Endothelial cell of umbilical vein (primary cell): ENCODE measurements at regions of chr1 and their contacts with region 1.

Region 1: DNA sequence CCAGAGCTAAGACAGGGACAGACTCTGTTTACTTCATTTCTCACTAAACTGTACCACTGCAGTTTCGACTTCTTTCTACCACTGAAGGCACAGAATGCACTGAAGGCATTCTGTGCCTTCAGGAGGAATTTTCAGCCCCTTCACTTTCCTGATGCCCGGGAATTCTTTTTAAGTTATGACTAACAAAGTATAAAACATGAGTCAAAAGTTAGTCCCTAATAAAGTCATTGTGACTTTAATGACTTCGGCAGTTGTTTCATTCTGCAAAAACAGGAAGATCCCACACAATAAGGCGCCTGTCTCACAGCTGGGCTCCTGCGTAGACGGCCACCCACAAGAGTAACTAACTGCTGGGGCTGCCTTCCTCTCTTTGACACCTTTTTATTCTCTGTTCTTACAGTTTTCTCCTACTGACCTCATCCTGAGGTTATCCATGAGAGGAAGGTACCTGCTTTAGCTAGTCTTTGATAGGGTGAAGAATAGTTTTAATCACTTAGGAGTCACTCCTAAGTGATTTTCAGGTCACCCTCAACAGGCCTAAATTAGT is 183.9 kb upstream of the SGIP1 start:
- DNase-seq: peak; percentile 93
- H3K4me3 ChIP-seq: peak overlapping the region in 1 of 3 experiments; percentile 3
- H3K27ac ChIP-seq: peak overlapping the region; percentile 96
- H3K4me1 ChIP-seq: peaks cover 100% of the 10 kb centered on the region
- H3K27me3 ChIP-seq: no peaks in the 10 kb centered on the region
- CTCF ChIP-seq: no peak
- POLR2A ChIP-seq: peak; percentile 14

Region 2: DNA sequence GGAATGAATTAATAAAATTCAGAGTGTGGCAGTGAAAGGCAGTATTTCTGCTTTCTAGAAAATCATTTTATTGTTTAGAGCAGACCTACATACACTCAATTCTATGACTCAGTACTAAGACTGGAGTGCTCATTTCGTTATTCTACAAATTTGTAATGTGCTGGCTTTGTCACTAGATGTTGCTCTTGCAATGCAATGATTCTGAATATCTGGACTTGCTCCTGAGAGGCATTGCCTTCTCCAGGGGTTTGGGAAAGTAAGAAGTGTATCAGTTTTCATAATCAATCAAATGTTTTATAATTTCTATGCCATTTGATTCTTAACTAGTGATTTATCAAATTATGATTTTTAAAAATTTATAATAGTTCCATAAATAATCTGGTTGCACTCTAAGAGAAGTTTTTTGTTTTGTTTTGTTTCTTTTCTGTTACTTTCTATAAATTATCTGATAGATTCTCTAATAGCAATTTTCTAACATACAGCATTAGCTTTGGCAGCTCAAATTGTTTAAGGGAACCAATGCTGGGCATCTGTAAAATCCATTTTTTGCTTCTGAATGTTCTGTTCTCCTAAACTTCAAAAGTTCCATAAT is 96.6 kb before region 1 on chr1:
- CTCF ChIA-PET with region 1: no interaction called
- POLR2A ChIA-PET with region 1: no interaction called
- dilution Hi-C with region 1: no loop called
- intact Hi-C with region 1: loop called (anchors 1 kb)
- DNase-seq: peak; percentile 89
- H3K4me3 ChIP-seq: no peak overlapping the region
- H3K27ac ChIP-seq: no peak overlapping the region
- H3K4me1 ChIP-seq: peaks cover 6% of the 10 kb centered on the region
- H3K27me3 ChIP-seq: no peaks in the 10 kb centered on the region
- CTCF ChIP-seq: peak; percentile 60
- POLR2A ChIP-seq: no peak

Region 3: GRCh38 chr1:66271216-66271903 is 78.7 kb before region 1 on chr1:
- CTCF ChIA-PET with region 1: no interaction called
- POLR2A ChIA-PET with region 1: interaction called, 11 read pairs
- dilution Hi-C with region 1: no loop called
- intact Hi-C with region 1: loop called (anchors 1 kb)
- DNase-seq: peak; percentile 98
- H3K4me3 ChIP-seq: no peak overlapping the region
- H3K27ac ChIP-seq: peak overlapping the region; percentile 71
- H3K4me1 ChIP-seq: peaks cover 49% of the 10 kb centered on the region
- H3K27me3 ChIP-seq: no peaks in the 10 kb centered on the region
- CTCF ChIP-seq: no peak
- POLR2A ChIP-seq: peak; percentile 73

Region 4: GRCh38 chr1:66371233-66372005 is 21.3 kb after region 1 on chr1:
- CTCF ChIA-PET with region 1: interaction called, 6 read pairs
- POLR2A ChIA-PET with region 1: interaction called, 5 read pairs
- dilution Hi-C with region 1: no loop called
- intact Hi-C with region 1: loop called (anchors 1 kb)
- DNase-seq: peak; percentile 98
- H3K4me3 ChIP-seq: peak overlapping the region in 1 of 3 experiments; percentile 29
- H3K27ac ChIP-seq: peak overlapping the region; percentile 99
- H3K4me1 ChIP-seq: peaks cover 60% of the 10 kb centered on the region
- H3K27me3 ChIP-seq: no peaks in the 10 kb centered on the region
- CTCF ChIP-seq: no peak
- POLR2A ChIP-seq: no peak

Region 5: GRCh38 chr1:66533804-66534740 is 184.0 kb after region 1 on chr1 and contains the start of gene SGIP1:
- CTCF ChIA-PET with region 1: no interaction called
- POLR2A ChIA-PET with region 1: no interaction called
- dilution Hi-C with region 1: loop called (anchors 25 kb)
- intact Hi-C with region 1: loop called (anchors 2 kb)
- DNase-seq: peak; percentile 88
- H3K4me3 ChIP-seq: peak within 1 kb of the TSS; percentile 41 to 66 (median 47)
- H3K27ac ChIP-seq: peak within 1 kb of the TSS; percentile 75
- H3K4me1 ChIP-seq: peaks cover 29% of the 10 kb centered on the region
- H3K27me3 ChIP-seq: no peaks in the 10 kb centered on the region
- CTCF ChIP-seq: no peak
- POLR2A ChIP-seq: no peak
- total RNA-seq, gene SGIP1: 51.0 and 68.9 TPM in 2 replicates